A549 (cell line): ENCODE measurements at regions of chr16 and their contacts with region 1.

Region 1: DNA sequence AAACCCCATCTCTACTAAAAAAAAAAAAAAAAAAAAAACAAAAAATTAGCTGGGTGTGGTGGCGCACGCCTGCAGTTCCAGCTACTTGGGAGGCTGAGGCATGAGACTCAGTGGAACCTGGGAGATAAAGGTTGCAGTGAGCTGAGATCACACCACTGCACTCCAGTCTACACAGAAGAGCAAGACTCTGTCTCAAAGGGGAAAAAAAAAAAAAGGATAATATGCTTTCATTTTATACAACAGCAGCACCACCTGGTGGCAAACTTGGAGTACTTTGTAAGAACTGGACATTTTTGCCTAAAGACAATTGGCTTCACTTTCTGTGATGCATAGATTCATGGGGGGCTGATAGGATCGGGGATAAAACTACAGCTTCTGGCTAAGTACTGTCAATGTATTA is 8.5 kb downstream of the CHTF8 start:
- DNase-seq: peak; percentile 60 to 78
- ATAC-seq: peak; percentile 59 to 72; a peak in 5 of 6 replicates
- H3K4me3 ChIP-seq: no peak overlapping the region
- H3K27ac ChIP-seq: no peak overlapping the region
- H3K4me1 ChIP-seq: no peaks in the 10 kb centered on the region
- CTCF ChIP-seq: peak; percentile 81
- EP300 ChIP-seq: no peak
- POLR2A ChIP-seq: no peak
- RAD21 ChIP-seq: peak; percentile 90 to 91

Region 2: DNA sequence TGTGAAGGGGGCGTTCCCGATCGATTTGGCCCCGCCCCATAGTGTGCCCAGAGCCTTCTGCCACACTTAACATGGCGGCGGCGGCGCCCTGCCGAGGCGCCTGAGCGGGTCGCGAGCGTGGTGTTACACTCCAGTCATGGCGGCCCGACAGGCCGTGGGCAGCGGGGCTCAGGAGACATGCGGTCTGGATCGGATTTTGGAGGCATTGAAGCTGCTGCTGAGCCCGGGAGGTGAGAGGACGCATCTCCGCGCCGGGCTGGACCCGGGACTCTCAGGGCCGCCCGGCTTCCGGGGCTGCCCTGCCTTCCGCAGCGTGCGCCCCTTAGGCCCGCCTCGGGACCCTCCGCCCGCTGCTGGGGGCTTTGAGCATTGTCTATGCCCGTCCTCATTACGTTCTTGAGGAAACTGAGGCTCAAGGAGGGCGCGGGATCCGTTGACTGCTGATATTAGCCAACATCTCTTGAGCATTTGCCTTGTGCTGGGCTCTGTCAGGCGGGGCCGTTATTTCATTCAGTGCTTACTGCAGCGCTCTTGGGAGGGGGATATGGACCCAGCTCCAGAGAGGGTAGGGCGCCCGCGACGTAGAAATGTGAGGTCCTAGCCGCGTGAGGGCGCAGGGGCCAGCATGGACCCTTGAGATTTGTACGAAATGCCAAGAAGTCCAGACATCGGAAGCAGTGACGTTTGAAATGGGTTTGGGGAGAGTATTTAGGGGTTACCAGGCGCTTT is 280.3 kb before region 1 on chr16 and contains the start of gene TANGO6:
- CTCF ChIA-PET with region 1: interaction called, 99 read pairs
- POLR2A ChIA-PET with region 1: no interaction called
- DNase-seq: peak; percentile 74 to 85
- ATAC-seq: peak; percentile 95 to 96
- H3K4me3 ChIP-seq: peak within 1 kb of the TSS; percentile 75
- H3K27ac ChIP-seq: peak within 1 kb of the TSS; percentile 93 to 99
- H3K4me1 ChIP-seq: 0 out of 3 replicates have a peak, but pooled peaks cover 5% of the 10 kb centered on the region
- CTCF ChIP-seq: peak; percentile 47
- EP300 ChIP-seq: no peak
- POLR2A ChIP-seq: peak; percentile 94
- RAD21 ChIP-seq: peak in 1 of 2 experiments; percentile 23; a peak in 4 of 5 replicates
- polyA plus RNA-seq, gene TANGO6: 19.5 and 30.2 TPM in 2 replicates

Region 3: GRCh38 chr16:68892214-68892613 is 231.7 kb before region 1 on chr16:
- CTCF ChIA-PET with region 1: interaction called, 503 read pairs
- POLR2A ChIA-PET with region 1: no interaction called
- DNase-seq: no peak
- ATAC-seq: no peak
- H3K4me3 ChIP-seq: no peak overlapping the region
- H3K27ac ChIP-seq: no peak overlapping the region
- H3K4me1 ChIP-seq: no peaks in the 10 kb centered on the region
- CTCF ChIP-seq: no peak
- EP300 ChIP-seq: no peak
- POLR2A ChIP-seq: no peak
- RAD21 ChIP-seq: no peak

Region 4: GRCh38 chr16:68985855-68986254 is 138.1 kb before region 1 on chr16:
- CTCF ChIA-PET with region 1: interaction called, 13 read pairs
- POLR2A ChIA-PET with region 1: no interaction called
- DNase-seq: peak in 1 of 2 experiments; percentile 28
- ATAC-seq: peak in 1 of 2 experiments; percentile 36; a peak in 2 of 6 replicates
- H3K4me3 ChIP-seq: no peak overlapping the region
- H3K27ac ChIP-seq: peak overlapping the region; percentile 11 to 66; a peak in 4 of 6 replicates
- H3K4me1 ChIP-seq: peaks cover 26% of the 10 kb centered on the region
- CTCF ChIP-seq: no peak
- EP300 ChIP-seq: no peak
- POLR2A ChIP-seq: no peak
- RAD21 ChIP-seq: no peak

Region 5: DNA sequence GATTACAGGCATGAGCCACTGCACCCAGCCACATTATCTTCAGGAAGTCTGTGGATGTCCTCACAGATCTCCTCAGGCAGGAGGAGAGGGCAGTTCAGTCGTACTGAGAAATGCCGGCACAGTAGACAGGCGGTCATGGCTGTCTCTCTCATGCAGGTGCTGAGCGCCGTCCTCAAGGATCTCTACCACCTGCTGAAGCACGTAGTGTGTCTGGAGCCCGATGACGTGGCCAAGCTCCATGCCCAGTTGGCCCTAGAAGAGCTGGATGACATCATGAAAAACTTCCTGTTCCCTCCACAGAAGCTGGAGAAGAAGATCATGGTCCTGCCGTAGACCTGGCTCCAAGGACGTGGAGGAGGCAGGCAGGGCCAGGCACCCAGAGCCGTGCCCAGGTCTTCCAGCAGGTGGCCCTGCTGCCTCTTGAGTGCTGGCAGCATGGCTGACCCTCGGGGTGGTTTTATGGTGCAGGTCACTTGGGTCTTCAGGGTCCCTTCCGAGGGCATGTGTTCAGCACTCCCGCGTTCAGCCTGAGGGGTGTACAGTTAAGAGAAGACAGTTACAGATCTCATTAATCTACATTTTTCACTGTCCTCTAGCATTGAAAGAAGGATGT is 40.5 kb before region 1 on chr16:
- CTCF ChIA-PET with region 1: interaction called, 11 read pairs
- POLR2A ChIA-PET with region 1: no interaction called
- DNase-seq: no peak
- ATAC-seq: peak in 1 of 2 experiments; percentile 80; a peak in 3 of 6 replicates
- H3K4me3 ChIP-seq: no peak overlapping the region
- H3K27ac ChIP-seq: no peak overlapping the region
- H3K4me1 ChIP-seq: peaks cover 5% of the 10 kb centered on the region; the same call in 2 of the 3 replicates
- CTCF ChIP-seq: 0 out of 3 replicates have a peak, but pooled peaks have one; percentile 11
- EP300 ChIP-seq: no peak
- POLR2A ChIP-seq: no peak
- RAD21 ChIP-seq: peak in 1 of 2 experiments; percentile 26; a peak in 1 of 5 replicates

Region 6: GRCh38 chr16:69112285-69113129 is 11.4 kb before region 1 on chr16:
- CTCF ChIA-PET with region 1: interaction called, 111 read pairs
- POLR2A ChIA-PET with region 1: interaction called, 4 read pairs
- DNase-seq: peak; percentile 66 to 85
- ATAC-seq: peak; percentile 89 to 92
- H3K4me3 ChIP-seq: no peak overlapping the region
- H3K27ac ChIP-seq: peak overlapping the region in 1 of 2 experiments; percentile 17; a peak in 1 of 6 replicates
- H3K4me1 ChIP-seq: peaks cover 12% of the 10 kb centered on the region
- CTCF ChIP-seq: peak; percentile 77
- EP300 ChIP-seq: no peak
- POLR2A ChIP-seq: no peak
- RAD21 ChIP-seq: peak; percentile 53 to 55

Region 7: DNA sequence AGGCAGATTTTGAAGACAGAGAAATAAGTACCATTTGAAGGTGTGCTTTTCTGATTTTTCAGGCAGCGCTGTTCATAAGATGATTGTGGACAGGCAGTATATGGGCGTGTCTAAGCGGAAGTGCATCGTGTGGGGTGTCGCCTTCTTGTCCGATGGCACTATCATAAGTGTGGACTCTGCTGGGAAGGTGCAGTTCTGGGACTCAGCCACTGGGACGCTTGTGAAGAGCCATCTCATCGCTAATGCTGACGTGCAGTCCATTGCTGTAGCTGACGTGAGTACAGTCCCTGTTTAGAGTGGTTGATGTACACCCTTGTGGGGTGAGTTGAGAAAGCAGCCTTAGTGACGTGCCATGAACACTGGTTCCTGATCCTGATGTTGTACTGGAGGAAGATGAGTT is 19.2 kb after region 1 on chr16:
- CTCF ChIA-PET with region 1: no interaction called
- POLR2A ChIA-PET with region 1: no interaction called
- DNase-seq: peak; percentile 40 to 75
- ATAC-seq: peak; percentile 96
- H3K4me3 ChIP-seq: no peak overlapping the region
- H3K27ac ChIP-seq: no peak overlapping the region
- H3K4me1 ChIP-seq: 0 out of 3 replicates have a peak, but pooled peaks cover 3% of the 10 kb centered on the region
- CTCF ChIP-seq: no peak
- EP300 ChIP-seq: no peak
- POLR2A ChIP-seq: no peak
- RAD21 ChIP-seq: no peak